Activated CD4-positive, alpha-beta T cell treated with anti-CD3 and anti-CD28 coated beads for 36 hours (primary cell): ENCODE measurements at regions of chr13 and their contacts with region 1.

Region 1: GRCh38 chr13:40026174-40026585 is 370.7 kb downstream of the COG6 start:
- DNase-seq: peak; percentile 79
- ATAC-seq: peak; percentile 82
- H3K4me3 Mint-ChIP-seq: peak overlapping the region; percentile 25
- H3K27ac Mint-ChIP-seq: peak overlapping the region; percentile 28
- H3K4me1 Mint-ChIP-seq: peaks cover 48% of the 10 kb centered on the region
- H3K27me3 Mint-ChIP-seq: no peaks in the 10 kb centered on the region

Region 2: DNA sequence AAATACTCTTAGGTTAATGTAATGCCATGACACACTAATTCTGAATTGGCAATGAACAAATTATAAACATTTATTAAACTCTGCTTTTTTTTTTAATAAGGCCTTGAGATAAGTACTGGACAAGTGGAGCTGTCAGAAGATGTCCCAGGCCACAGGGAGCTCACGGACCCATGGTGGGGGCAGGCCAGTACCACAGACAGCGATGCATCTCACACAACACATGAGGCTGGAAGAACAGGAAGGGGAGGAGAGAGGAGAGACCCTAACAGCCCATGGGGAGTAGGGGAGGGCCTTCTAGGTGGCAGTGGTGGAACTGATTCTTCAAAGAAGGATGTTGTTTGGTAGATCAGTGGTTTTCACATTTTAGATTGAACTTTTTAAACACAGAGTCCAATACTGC is 551.6 kb before region 1 on chr13:
- CTCF ChIA-PET with region 1: no interaction called
- POLR2A ChIA-PET with region 1: no interaction called
- intact Hi-C with region 1: no loop called
- DNase-seq: no peak
- ATAC-seq: no peak
- H3K4me3 Mint-ChIP-seq: no peak overlapping the region
- H3K27ac Mint-ChIP-seq: no peak overlapping the region
- H3K4me1 Mint-ChIP-seq: no peaks in the 10 kb centered on the region
- H3K27me3 Mint-ChIP-seq: peaks cover 16% of the 10 kb centered on the region

Region 3: GRCh38 chr13:39684531-39685137 is 341.5 kb before region 1 on chr13:
- CTCF ChIA-PET with region 1: no interaction called
- POLR2A ChIA-PET with region 1: no interaction called
- intact Hi-C with region 1: loop called (anchors 10 kb)
- DNase-seq: no peak
- ATAC-seq: no peak
- H3K4me3 Mint-ChIP-seq: no peak overlapping the region
- H3K27ac Mint-ChIP-seq: no peak overlapping the region
- H3K4me1 Mint-ChIP-seq: peaks cover 21% of the 10 kb centered on the region
- H3K27me3 Mint-ChIP-seq: no peaks in the 10 kb centered on the region

Region 4: DNA sequence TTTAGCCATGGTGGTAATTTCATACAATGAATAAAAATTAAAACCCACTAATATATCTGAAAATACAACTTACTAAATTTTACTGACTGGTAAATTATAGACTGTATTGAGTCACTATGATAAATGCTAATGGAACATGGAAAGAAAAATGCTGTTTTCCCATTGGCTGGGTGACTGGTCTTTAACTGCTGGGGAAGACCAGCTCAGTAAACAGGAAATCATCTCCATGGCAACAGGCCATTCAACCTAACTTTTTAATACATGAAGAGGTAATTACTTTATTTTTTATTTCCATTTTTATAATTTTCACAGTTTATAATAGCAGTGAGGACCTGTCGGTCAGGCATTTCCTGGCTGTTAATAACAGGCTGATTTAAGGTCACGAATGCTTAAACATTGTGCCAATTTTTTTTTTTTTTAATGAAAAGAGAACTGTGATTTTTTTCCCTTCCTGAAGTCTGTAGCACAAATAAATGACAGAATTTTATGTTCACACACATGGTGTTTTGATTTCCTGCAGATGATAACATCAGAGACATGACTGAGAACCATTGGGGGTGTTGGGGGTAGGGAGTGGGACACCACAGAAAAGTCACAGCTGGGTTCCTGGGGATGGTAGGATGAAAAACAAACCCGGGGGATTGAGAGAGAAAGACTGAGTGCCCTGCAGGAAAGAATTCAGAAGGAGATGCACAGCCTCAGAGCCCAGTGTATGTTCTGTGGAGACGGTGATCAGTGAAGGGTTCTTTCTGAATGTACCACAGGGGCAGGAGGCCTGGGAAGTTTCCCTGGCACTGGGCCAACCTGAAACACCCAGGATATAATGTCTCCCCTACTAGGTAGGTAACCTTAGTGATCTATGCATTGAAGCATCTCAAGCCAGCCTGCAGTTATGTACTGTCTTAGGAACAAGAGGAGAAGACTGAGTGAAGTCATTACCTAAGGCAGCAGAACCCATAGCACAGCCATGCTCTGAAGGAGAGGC is 73.6 kb before region 1 on chr13:
- CTCF ChIA-PET with region 1: no interaction called
- POLR2A ChIA-PET with region 1: no interaction called
- intact Hi-C with region 1: loop called (anchors 1 to 5 kb)
- DNase-seq: peak; percentile 15
- ATAC-seq: no peak
- H3K4me3 Mint-ChIP-seq: no peak overlapping the region
- H3K27ac Mint-ChIP-seq: no peak overlapping the region
- H3K4me1 Mint-ChIP-seq: peaks cover 49% of the 10 kb centered on the region
- H3K27me3 Mint-ChIP-seq: no peaks in the 10 kb centered on the region

Region 5: DNA sequence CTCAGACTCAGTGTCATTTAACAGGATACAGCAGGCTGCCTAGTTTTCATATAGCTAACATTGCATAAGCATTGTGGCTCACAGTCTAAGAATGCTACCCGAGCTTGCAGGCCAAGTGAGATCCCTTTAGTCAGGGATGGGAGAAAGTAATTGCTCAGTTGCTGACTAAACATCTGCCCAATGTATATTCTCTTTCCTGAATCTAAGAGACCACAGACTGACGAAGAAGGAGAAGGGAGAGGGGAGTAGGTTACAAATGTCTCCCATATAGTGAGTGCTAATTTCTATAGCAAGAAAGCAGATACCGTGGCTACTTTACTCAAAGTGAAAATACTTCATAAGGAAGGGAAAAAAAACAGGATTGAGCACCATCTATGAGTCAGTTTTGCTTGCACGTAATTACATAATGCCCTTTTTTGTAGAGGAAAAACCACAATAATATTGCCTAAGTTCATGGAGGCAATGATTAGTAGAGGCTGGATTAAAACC is 83.2 kb after region 1 on chr13:
- CTCF ChIA-PET with region 1: no interaction called
- POLR2A ChIA-PET with region 1: no interaction called
- intact Hi-C with region 1: loop called in 1 of 2 experiments (anchors 1 kb)
- DNase-seq: peak; percentile 45
- ATAC-seq: peak; percentile 94
- H3K4me3 Mint-ChIP-seq: no peak overlapping the region
- H3K27ac Mint-ChIP-seq: peak overlapping the region; percentile 44
- H3K4me1 Mint-ChIP-seq: peaks cover 37% of the 10 kb centered on the region
- H3K27me3 Mint-ChIP-seq: no peaks in the 10 kb centered on the region

Region 6: DNA sequence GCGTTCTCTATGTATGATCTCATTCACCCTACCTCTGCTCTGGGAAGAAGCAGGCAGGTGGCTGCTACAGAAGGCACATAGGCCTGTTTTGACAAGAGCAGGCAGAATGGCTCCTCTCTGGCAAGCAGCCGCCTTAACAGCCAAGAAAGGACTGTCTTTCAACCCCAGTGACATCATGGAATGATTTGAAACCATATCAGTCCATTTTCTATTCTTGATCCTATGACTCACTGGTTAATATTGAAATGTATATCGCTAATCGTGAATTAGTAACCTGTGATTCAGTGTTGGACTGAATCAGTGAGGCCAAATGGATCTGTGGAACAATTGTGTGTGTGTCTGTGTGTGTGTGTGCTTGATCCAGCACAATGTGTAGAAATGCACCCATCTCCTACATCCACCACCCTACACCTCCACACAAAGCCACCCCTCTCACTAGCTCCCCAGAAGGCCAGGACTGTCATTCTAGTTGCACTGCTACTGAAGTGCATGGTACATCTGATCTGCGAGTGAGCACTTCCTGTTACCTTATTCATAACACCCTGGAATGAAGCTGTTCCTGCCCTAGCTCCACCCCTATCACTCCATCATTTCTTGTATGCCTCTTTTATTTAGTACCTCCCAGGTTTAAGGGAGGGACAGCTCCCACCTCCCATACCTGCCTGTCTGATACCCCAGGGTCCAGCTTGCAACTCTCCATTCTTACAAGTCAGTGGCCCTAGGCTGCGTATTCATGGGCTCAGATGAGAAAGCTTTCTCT is 180.2 kb after region 1 on chr13:
- CTCF ChIA-PET with region 1: no interaction called
- POLR2A ChIA-PET with region 1: interaction called, 3 read pairs
- intact Hi-C with region 1: loop called (anchors 1 to 2 kb)
- DNase-seq: peak; percentile 68
- ATAC-seq: peak; percentile 89
- H3K4me3 Mint-ChIP-seq: peak overlapping the region; percentile 58
- H3K27ac Mint-ChIP-seq: peak overlapping the region; percentile 99
- H3K4me1 Mint-ChIP-seq: peaks cover 64% of the 10 kb centered on the region
- H3K27me3 Mint-ChIP-seq: no peaks in the 10 kb centered on the region

Region 7: DNA sequence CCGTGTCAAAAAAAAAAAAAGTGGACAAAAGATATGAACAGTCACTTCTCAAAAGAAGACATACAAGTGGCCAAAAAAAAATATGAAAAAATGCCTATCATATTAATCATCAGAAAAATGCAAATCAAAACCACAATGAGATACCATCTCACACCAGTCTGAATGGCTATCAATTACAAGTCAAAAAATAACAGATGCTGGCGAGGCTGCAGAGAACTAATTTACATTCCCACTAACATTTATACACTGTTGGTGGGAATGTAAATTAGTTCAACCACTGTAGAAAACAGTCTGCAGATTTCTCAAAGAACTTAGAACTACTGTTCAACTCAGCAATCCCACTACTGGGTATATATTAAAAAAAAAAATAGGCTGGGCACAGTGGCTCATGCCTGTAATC is 666.8 kb after region 1 on chr13:
- CTCF ChIA-PET with region 1: no interaction called
- POLR2A ChIA-PET with region 1: no interaction called
- intact Hi-C with region 1: no loop called
- DNase-seq: no peak
- ATAC-seq: no peak
- H3K4me3 Mint-ChIP-seq: no peak overlapping the region
- H3K27ac Mint-ChIP-seq: no peak overlapping the region
- H3K4me1 Mint-ChIP-seq: no peaks in the 10 kb centered on the region
- H3K27me3 Mint-ChIP-seq: no peaks in the 10 kb centered on the region

Region 8: GRCh38 chr13:40777166-40777808 is 751.1 kb after region 1 on chr13:
- CTCF ChIA-PET with region 1: interaction called, 3 read pairs
- POLR2A ChIA-PET with region 1: no interaction called
- intact Hi-C with region 1: loop called in 1 of 2 experiments (anchors 5 kb)
- DNase-seq: peak; percentile 57
- ATAC-seq: peak; percentile 49
- H3K4me3 Mint-ChIP-seq: peak overlapping the region; percentile 52
- H3K27ac Mint-ChIP-seq: peak overlapping the region; percentile 98
- H3K4me1 Mint-ChIP-seq: peaks cover 29% of the 10 kb centered on the region
- H3K27me3 Mint-ChIP-seq: no peaks in the 10 kb centered on the region